ENCODE measurements at regions of chr1 and their contacts with region 1.

Region 1: GRCh38 chr1:15994590-15995351 is 9.3 kb upstream of the SRARP start:
- DNase-seq: peak in 3 of 5 donors; percentile 26 to 50 (median 32)
- H3K4me3 ChIP-seq: no peak overlapping the region
- H3K4me3 Mint-ChIP-seq: no peak overlapping the region
- H3K27ac ChIP-seq: no peak overlapping the region
- H3K27ac Mint-ChIP-seq: peak overlapping the region in 2 of 7 donors; percentile 10 to 61
- H3K4me1 ChIP-seq: no peaks in the 10 kb centered on the region
- H3K4me1 Mint-ChIP-seq: no peaks in the 10 kb centered on the region
- H3K27me3 ChIP-seq: no peaks in the 10 kb centered on the region
- H3K27me3 Mint-ChIP-seq: peaks cover 0 to 2% of the 10 kb centered on the region in 2 donors

Region 2: GRCh38 chr1:15788624-15789301 is 206.0 kb before region 1 on chr1:
- CTCF ChIA-PET with region 1: interaction called, 3 read pairs
- POLR2A ChIA-PET with region 1: no interaction called
- intact Hi-C with region 1: loop called (anchors 1 kb)
- DNase-seq: no peak
- H3K4me3 ChIP-seq: no peak overlapping the region
- H3K4me3 Mint-ChIP-seq: no peak overlapping the region
- H3K27ac ChIP-seq: no peak overlapping the region
- H3K27ac Mint-ChIP-seq: no peak overlapping the region
- H3K4me1 ChIP-seq: peaks cover 6% of the 10 kb centered on the region
- H3K4me1 Mint-ChIP-seq: peaks cover 2 to 5% (median 4%) of the 10 kb centered on the region in 4 donors
- H3K27me3 ChIP-seq: no peaks in the 10 kb centered on the region
- H3K27me3 Mint-ChIP-seq: peaks cover 0 to 7% of the 10 kb centered on the region in 2 donors

Region 3: DNA sequence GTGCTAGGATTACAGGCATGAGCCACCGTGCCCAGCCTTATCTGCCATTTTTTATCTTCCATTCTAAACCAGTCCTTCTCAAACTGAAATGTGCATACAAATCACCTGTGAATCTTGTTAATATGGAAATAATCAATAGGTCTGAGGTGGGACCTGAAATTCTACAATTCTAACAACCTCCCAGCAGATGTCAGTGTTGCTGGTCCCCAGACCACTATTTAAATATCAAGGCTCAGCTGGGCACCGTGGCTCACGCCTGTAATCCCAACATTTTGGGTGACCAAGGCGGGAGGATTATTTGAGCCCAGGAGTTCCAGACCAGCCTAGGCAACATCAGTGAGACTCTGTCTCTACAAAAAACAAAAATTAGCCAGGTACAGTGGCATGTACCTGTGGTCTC is 191.4 kb before region 1 on chr1:
- CTCF ChIA-PET with region 1: interaction called, 3 read pairs
- POLR2A ChIA-PET with region 1: no interaction called
- intact Hi-C with region 1: loop called (anchors 1 kb)
- DNase-seq: peak in 3 of 5 donors; percentile 10 to 24 (median 13)
- H3K4me3 ChIP-seq: no peak overlapping the region
- H3K4me3 Mint-ChIP-seq: no peak overlapping the region
- H3K27ac ChIP-seq: no peak overlapping the region
- H3K27ac Mint-ChIP-seq: no peak overlapping the region
- H3K4me1 ChIP-seq: no peaks in the 10 kb centered on the region
- H3K4me1 Mint-ChIP-seq: peaks cover 0 to 2% (median 0%) of the 10 kb centered on the region in 4 donors
- H3K27me3 ChIP-seq: no peaks in the 10 kb centered on the region
- H3K27me3 Mint-ChIP-seq: peaks cover 2 to 4% of the 10 kb centered on the region in 2 donors

Region 4: DNA sequence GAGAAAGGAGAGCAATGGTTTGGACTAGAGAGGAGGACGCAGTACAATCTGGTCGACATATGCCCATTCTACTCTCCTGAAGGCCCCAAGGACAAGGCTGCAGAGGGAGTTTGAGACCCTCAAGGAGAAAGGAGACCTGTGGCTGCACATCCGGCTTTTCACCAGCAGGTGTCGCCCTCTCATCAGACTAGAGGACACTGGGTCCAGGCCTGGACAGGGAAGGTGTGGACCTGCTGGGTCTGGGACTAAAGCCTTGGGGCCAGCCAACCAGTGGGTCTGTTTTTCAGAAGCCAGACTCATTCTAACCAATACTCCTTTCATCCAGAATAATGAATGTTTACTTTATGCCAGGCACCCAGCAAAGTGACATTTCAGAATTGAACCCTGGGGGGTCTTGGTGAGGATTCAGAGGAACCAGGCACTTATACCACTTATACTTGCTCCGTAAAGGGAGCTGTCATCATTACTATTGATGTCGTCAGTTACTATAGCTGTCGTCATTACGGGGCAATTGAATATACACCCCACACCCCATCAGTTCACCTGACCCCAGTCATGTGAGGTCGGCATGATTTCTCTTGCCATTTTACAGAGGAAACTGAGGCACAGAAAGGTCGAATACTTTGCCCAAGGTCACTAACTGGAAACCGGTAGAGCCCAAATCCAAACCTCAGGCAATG is 14.4 kb after region 1 on chr1:
- CTCF ChIA-PET with region 1: interaction called, 13 read pairs
- POLR2A ChIA-PET with region 1: no interaction called
- intact Hi-C with region 1: no loop called
- DNase-seq: peak; percentile 53 to 64 (median 59)
- H3K4me3 ChIP-seq: no peak overlapping the region
- H3K4me3 Mint-ChIP-seq: no peak overlapping the region
- H3K27ac ChIP-seq: no peak overlapping the region
- H3K27ac Mint-ChIP-seq: peak overlapping the region in 1 of 7 donors; percentile 64
- H3K4me1 ChIP-seq: peaks cover 13% of the 10 kb centered on the region
- H3K4me1 Mint-ChIP-seq: peaks cover 0 to 4% (median 4%) of the 10 kb centered on the region in 4 donors
- H3K27me3 ChIP-seq: no peaks in the 10 kb centered on the region
- H3K27me3 Mint-ChIP-seq: peaks cover 2 to 9% of the 10 kb centered on the region in 2 donors

Measured in CD4-positive, alpha-beta memory T cell (primary cell).